ENCODE measurements at regions of chr1 and their contacts with region 1.

Region 1: DNA sequence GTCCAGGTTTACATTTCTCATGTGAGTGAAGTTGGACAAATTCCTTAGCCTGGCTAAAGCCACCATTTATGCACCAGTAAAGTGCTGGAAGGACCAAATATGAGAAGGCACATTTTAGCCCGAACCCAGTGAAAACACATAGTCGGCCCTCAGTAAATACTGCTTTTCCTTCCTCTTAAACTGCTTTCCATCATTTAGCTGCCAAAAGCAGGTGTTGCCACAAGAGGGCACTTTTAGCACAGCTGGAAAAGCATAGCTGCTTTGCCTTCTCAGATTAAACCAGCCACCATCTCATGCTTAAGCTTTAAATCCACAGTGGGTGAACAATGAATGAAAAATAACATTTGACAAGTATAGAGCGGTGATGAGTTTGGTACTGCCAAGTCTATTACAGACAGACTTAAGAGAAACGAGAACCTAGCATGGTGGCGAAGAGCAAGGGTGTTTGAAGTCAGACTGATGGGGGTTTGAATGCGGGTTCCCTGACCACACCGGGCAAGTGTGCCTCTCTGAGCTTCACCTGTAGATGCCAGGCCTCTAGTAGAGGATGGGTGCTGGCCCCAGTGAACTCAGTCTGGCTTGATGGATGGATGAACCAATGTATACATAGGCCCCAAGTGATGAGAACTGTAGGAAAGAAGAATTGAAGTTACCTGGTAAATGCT is 57.8 kb downstream of the SLC35D1 start:
- DNase-seq: peak; percentile 33 to 77 (median 43)
- ATAC-seq: peak; percentile 88
- H3K4me3 ChIP-seq: no peak overlapping the region
- H3K27ac ChIP-seq: no peak overlapping the region
- H3K4me1 ChIP-seq: no peaks in the 10 kb centered on the region
- H3K27me3 ChIP-seq: no peaks in the 10 kb centered on the region
- CTCF ChIP-seq: peak; percentile 88 to 93 (median 92)
- EP300 ChIP-seq: no peak
- POLR2A ChIP-seq: no peak
- RAD21 ChIP-seq: peak; percentile 93 to 96

Region 2: GRCh38 chr1:66618390-66618789 is 377.8 kb before region 1 on chr1:
- CTCF ChIA-PET with region 1: no interaction called
- POLR2A ChIA-PET with region 1: no interaction called
- in situ Hi-C with region 1: no loop called
- intact Hi-C with region 1: no loop called
- DNase-seq: no peak
- ATAC-seq: no peak
- H3K4me3 ChIP-seq: no peak overlapping the region
- H3K27ac ChIP-seq: no peak overlapping the region
- H3K4me1 ChIP-seq: no peaks in the 10 kb centered on the region
- H3K27me3 ChIP-seq: peaks cover 0 to 5% of the 10 kb centered on the region in 2 experiments; a peak in 1 of 5 replicates
- CTCF ChIP-seq: no peak
- EP300 ChIP-seq: no peak
- POLR2A ChIP-seq: no peak
- RAD21 ChIP-seq: no peak

Region 3: GRCh38 chr1:66876664-66877063 is 119.5 kb before region 1 on chr1:
- CTCF ChIA-PET with region 1: no interaction called
- POLR2A ChIA-PET with region 1: no interaction called
- in situ Hi-C with region 1: no loop called
- intact Hi-C with region 1: loop called (anchors 5 kb)
- DNase-seq: peak in 1 of 4 experiments; percentile 14
- ATAC-seq: peak; percentile 85
- H3K4me3 ChIP-seq: no peak overlapping the region
- H3K27ac ChIP-seq: no peak overlapping the region
- H3K4me1 ChIP-seq: no peaks in the 10 kb centered on the region
- H3K27me3 ChIP-seq: no peaks in the 10 kb centered on the region
- CTCF ChIP-seq: peak; percentile 13 to 46 (median 25); a peak in 2 of 6 replicates
- EP300 ChIP-seq: no peak
- POLR2A ChIP-seq: no peak
- RAD21 ChIP-seq: peak in 1 of 2 experiments; percentile 50; a peak in 2 of 4 replicates

Region 4: GRCh38 chr1:67020765-67021164 is 24.6 kb after region 1 on chr1:
- CTCF ChIA-PET with region 1: no interaction called
- POLR2A ChIA-PET with region 1: no interaction called
- in situ Hi-C with region 1: no loop called
- intact Hi-C with region 1: no loop called
- DNase-seq: no peak
- ATAC-seq: no peak
- H3K4me3 ChIP-seq: no peak overlapping the region
- H3K27ac ChIP-seq: no peak overlapping the region
- H3K4me1 ChIP-seq: no peaks in the 10 kb centered on the region
- H3K27me3 ChIP-seq: no peaks in the 10 kb centered on the region
- CTCF ChIP-seq: no peak
- EP300 ChIP-seq: no peak
- POLR2A ChIP-seq: no peak
- RAD21 ChIP-seq: no peak

Region 5: DNA sequence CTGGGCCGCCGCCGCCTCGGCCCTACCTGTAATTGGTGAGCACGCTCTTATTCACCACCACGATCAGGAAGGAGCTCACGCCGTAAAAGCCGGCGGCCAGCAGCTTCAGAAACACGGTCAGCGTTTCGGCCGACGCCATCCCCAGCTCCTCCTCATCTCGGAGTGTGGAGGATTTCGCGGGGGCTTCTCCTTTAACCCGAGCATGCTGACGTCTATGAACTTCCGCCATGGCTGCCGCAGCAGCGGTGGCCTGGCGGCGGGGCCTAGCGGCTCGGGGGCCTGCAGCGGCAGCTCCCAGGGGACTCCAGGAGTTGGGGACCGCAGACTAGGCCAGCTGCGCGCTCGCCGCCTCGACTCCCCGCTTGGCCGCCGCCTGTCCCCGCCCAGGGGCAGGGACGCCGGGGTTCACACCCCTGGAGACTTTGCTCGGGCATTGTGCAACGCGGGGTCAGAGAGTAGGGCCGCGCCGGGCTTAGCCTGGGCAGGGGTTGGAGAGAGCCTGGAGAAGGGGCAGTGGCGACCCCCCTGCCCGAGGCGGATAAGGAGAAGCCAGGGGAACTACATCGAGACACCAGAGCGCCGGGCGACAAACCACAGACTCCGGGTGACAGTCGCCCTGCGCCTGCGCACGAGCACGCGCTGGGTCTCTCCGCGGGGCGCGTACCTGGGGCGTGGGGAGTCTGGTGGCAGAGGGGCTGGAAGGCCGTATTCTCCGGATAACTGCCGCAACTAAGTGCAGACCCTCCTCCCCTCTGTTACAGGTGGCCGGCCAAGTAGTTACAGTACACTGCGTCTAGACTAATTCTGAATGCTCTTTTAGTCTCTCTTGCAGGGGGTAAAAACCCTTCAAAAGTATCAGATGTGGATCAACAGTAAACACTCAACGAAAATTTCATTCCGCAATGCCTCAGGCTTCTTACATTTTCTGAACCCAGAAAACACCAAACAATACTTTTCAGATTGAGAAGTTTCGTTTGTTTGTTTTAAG is 57.9 kb after region 1 on chr1 and contains the start of gene SLC35D1:
- CTCF ChIA-PET with region 1: no interaction called
- POLR2A ChIA-PET with region 1: no interaction called
- in situ Hi-C with region 1: no loop called
- intact Hi-C with region 1: loop called (anchors 5 kb)
- DNase-seq: peak; percentile 73 to 86 (median 82)
- ATAC-seq: peak; percentile 84
- H3K4me3 ChIP-seq: peak within 1 kb of the TSS; percentile 71
- H3K27ac ChIP-seq: peak within 1 kb of the TSS; percentile 79
- H3K4me1 ChIP-seq: peaks cover 7 to 15% of the 10 kb centered on the region in 2 experiments; a peak in 3 of 5 replicates
- H3K27me3 ChIP-seq: no peaks in the 10 kb centered on the region
- CTCF ChIP-seq: no peak
- EP300 ChIP-seq: no peak
- POLR2A ChIP-seq: peak; percentile 87
- RAD21 ChIP-seq: no peak
- polyA plus RNA-seq, gene SLC35D1: 2.3 to 3.4 TPM

Region 6: GRCh38 chr1:67214420-67215174 is 218.4 kb after region 1 on chr1:
- CTCF ChIA-PET with region 1: interaction called, 9 read pairs
- POLR2A ChIA-PET with region 1: interaction called, 6 read pairs
- in situ Hi-C with region 1: no loop called
- intact Hi-C with region 1: loop called (anchors 1 kb)
- DNase-seq: peak in 1 of 4 experiments; percentile 48
- ATAC-seq: peak; percentile 49
- H3K4me3 ChIP-seq: no peak overlapping the region
- H3K27ac ChIP-seq: no peak overlapping the region
- H3K4me1 ChIP-seq: peaks cover 4 to 13% of the 10 kb centered on the region in 2 experiments; a peak in 1 of 5 replicates
- H3K27me3 ChIP-seq: no peaks in the 10 kb centered on the region
- CTCF ChIP-seq: peak; percentile 47 to 57 (median 51); a peak in 5 of 6 replicates
- EP300 ChIP-seq: no peak
- POLR2A ChIP-seq: no peak
- RAD21 ChIP-seq: peak in 1 of 2 experiments; percentile 37; a peak in 2 of 4 replicates

Region 7: DNA sequence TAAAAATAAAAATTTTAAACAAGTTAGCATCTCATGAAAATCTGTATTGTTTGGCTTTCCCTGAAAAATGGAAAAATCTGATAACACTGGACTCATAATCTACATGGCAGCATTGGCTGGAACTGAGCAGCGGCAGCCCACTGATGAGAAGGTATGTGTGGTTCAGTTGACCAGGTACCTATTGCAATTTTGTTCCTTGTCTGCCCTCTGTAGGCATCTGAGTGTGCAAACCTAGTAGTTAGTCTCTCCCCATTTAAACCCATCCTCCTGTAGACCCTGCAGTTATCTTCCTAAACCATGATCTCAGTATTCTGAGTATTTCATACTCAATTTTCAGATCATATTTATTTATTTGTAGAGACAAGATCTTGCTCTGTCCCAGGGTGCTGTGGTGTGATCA is 493.5 kb after region 1 on chr1:
- CTCF ChIA-PET with region 1: interaction called, 3 read pairs
- POLR2A ChIA-PET with region 1: no interaction called
- in situ Hi-C with region 1: loop called (anchors 25 kb)
- intact Hi-C with region 1: no loop called
- DNase-seq: peak in 3 of 4 experiments; percentile 19 to 61 (median 60)
- ATAC-seq: peak; percentile 92
- H3K4me3 ChIP-seq: no peak overlapping the region
- H3K27ac ChIP-seq: no peak overlapping the region
- H3K4me1 ChIP-seq: peaks cover 0 to 5% of the 10 kb centered on the region in 2 experiments; a peak in 3 of 5 replicates
- H3K27me3 ChIP-seq: no peaks in the 10 kb centered on the region
- CTCF ChIP-seq: peak; percentile 41 to 76 (median 49); a peak in 5 of 6 replicates
- EP300 ChIP-seq: no peak
- POLR2A ChIP-seq: no peak
- RAD21 ChIP-seq: peak; percentile 55 to 89

Region 8: GRCh38 chr1:67500413-67500959 is 504.3 kb after region 1 on chr1:
- CTCF ChIA-PET with region 1: interaction called, 5 read pairs
- POLR2A ChIA-PET with region 1: no interaction called
- in situ Hi-C with region 1: loop called (anchors 25 kb)
- intact Hi-C with region 1: loop called (anchors 5 kb)
- DNase-seq: peak; percentile 89 to 95 (median 90)
- ATAC-seq: peak; percentile 99
- H3K4me3 ChIP-seq: no peak overlapping the region
- H3K27ac ChIP-seq: no peak overlapping the region
- H3K4me1 ChIP-seq: peaks cover 0 to 5% of the 10 kb centered on the region in 2 experiments; a peak in 3 of 5 replicates
- H3K27me3 ChIP-seq: no peaks in the 10 kb centered on the region
- CTCF ChIP-seq: peak; percentile 97 to 99 (median 98)
- EP300 ChIP-seq: no peak
- POLR2A ChIP-seq: no peak
- RAD21 ChIP-seq: peak; percentile 98 to 99